ENCODE measurements at regions of chr12 and their contacts with region 1.

Region 1: DNA sequence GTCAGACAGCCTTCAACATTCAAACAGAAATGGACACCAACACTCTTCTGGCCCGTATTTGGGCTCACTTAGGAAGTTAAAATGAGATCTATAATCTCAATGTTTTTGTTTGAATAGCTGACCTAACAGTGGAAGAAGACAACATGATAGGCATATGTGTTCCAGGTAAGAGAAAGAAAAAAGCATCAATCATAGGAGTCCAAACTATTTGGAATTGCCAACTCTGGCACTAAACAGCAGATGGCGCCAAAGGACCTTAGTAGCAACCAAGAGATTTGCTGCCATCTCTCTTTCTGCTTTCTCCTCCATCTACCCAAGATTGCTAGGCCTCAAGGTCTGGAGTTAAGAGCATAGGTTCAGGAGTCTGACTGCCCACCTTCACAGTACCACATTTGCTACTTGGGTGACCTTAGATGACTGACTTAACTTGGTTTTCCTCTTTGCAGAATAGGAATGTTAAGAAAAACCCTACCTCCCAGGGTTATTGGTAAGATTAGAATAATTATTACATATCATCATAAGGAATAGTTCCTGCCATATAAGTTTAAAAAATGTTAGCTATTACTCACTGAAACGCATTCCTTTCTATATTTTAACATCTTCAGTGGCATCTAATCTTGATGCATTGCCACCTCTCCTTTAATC is 30.2 kb downstream of the PEX5 start:
- DNase-seq: peak; percentile 32 to 46
- ATAC-seq: peak in 1 of 2 donors; percentile 79
- H3K4me3 ChIP-seq: no peak overlapping the region
- H3K27ac ChIP-seq: no peak overlapping the region
- H3K4me1 ChIP-seq: no peaks in the 10 kb centered on the region
- H3K27me3 ChIP-seq: no peaks in the 10 kb centered on the region
- CTCF ChIP-seq: peak; percentile 60 to 83 (median 74)
- POLR2A ChIP-seq: no peak

Region 2: GRCh38 chr12:7460375-7461259 is 240.9 kb after region 1 on chr12:
- in situ Hi-C with region 1: loop called in 1 of 4 experiments (anchors 5 kb)
- intact Hi-C with region 1: loop called (anchors 10 kb)
- DNase-seq: no peak
- ATAC-seq: no peak
- H3K4me3 ChIP-seq: no peak overlapping the region
- H3K27ac ChIP-seq: no peak overlapping the region
- H3K4me1 ChIP-seq: no peaks in the 10 kb centered on the region
- H3K27me3 ChIP-seq: no peaks in the 10 kb centered on the region
- CTCF ChIP-seq: peak in 4 of 5 experiments; percentile 9 to 46 (median 36)
- POLR2A ChIP-seq: no peak

Region 3: GRCh38 chr12:7638760-7639555 is 419.2 kb after region 1 on chr12:
- in situ Hi-C with region 1: loop called (anchors 5 kb)
- intact Hi-C with region 1: loop called (anchors 1 kb)
- DNase-seq: peak; percentile 47 to 57
- ATAC-seq: peak; percentile 86 to 91
- H3K4me3 ChIP-seq: no peak overlapping the region
- H3K27ac ChIP-seq: no peak overlapping the region
- H3K4me1 ChIP-seq: no peaks in the 10 kb centered on the region
- H3K27me3 ChIP-seq: peaks cover 0 to 4% (median 0%) of the 10 kb centered on the region in 3 donors
- CTCF ChIP-seq: peak; percentile 82 to 88 (median 84)
- POLR2A ChIP-seq: no peak